Panc1 (cell line): ENCODE measurements at regions of chr14 and their contacts with region 1.

Region 1: GRCh38 chr14:91869556-91869955 is 2.2 kb upstream of the TC2N start:
- DNase-seq: no peak
- ATAC-seq: no peak
- H3K4me3 ChIP-seq: no peak overlapping the region
- H3K27ac ChIP-seq: no peak overlapping the region
- H3K4me1 ChIP-seq: no peaks in the 10 kb centered on the region
- H3K27me3 ChIP-seq: no peaks in the 10 kb centered on the region
- CTCF ChIP-seq: no peak

Region 2: DNA sequence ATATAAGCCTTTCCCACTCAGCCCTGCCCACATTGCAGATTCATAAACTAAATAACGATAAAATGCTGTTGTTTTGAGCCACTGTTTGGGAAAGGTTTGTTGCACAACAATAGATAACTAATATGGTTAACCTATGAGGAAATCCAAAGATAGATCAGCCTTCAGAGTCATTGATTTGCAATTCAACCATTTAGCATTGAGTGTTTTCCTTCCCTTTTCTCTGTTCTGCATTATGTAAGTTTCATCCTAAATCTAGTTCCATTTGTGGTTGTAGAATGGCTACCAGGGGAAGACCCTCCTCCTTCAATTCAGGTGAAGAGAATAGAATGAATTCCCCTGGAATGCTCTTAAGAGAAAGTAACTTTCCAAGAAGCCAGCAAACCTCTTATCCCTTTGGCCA is 21.9 kb before region 1 on chr14:
- CTCF ChIA-PET with region 1: interaction called, 11 read pairs
- POLR2A ChIA-PET with region 1: no interaction called
- in situ Hi-C with region 1: no loop called
- intact Hi-C with region 1: no loop called
- DNase-seq: no peak
- ATAC-seq: no peak
- H3K4me3 ChIP-seq: no peak overlapping the region
- H3K27ac ChIP-seq: no peak overlapping the region
- H3K4me1 ChIP-seq: no peaks in the 10 kb centered on the region
- H3K27me3 ChIP-seq: no peaks in the 10 kb centered on the region; the same call in 1 of the 2 replicates
- CTCF ChIP-seq: no peak

Region 3: GRCh38 chr14:91934554-91935285 is 65.2 kb after region 1 on chr14:
- CTCF ChIA-PET with region 1: no interaction called
- POLR2A ChIA-PET with region 1: no interaction called
- in situ Hi-C with region 1: no loop called
- intact Hi-C with region 1: no loop called
- DNase-seq: no peak
- ATAC-seq: no peak
- H3K4me3 ChIP-seq: no peak overlapping the region
- H3K27ac ChIP-seq: no peak overlapping the region
- H3K4me1 ChIP-seq: no peaks in the 10 kb centered on the region
- H3K27me3 ChIP-seq: no peaks in the 10 kb centered on the region
- CTCF ChIP-seq: no peak

Region 4: DNA sequence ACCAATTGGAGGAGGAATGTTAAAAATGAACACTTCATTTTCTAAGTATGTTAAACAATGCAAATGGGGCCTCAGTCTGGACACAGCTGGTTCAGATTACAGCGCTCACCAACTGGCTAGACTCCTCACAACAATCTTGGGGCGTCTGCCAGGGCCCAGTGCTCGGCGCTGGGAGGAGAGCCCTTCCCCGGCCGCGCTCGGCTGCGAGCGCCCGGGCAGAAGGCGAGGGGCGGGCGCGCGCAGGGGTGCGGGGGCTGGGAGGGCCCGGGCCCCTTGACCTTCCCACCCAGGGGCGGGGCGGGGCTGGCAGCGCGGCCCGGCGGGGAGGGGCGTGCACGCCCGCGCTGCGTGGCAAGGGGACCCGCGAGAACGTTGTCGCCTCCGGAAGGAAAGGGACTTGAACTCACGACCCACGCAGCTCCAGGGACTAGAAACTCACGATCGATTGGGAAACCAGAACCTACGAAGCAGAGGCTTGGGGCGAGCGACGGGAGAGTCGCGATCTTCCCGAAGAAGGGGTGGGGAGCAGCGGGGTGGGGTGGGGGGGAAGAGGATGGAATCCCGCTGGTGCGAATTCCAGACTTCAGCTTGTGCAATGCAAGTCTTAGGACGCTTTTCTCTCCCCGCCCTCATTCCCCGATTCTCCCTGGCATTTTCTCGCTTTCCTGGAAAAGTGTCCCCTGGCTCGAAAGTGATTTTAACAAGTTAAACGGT is 78.1 kb after region 1 on chr14 and contains the start of gene FBLN5:
- CTCF ChIA-PET with region 1: no interaction called
- POLR2A ChIA-PET with region 1: no interaction called
- in situ Hi-C with region 1: no loop called
- intact Hi-C with region 1: no loop called
- DNase-seq: no peak
- ATAC-seq: peak; percentile 62
- H3K4me3 ChIP-seq: peak within 1 kb of the TSS; percentile 34 to 43
- H3K27ac ChIP-seq: no peak within 1 kb of the TSS
- H3K4me1 ChIP-seq: no peaks in the 10 kb centered on the region
- H3K27me3 ChIP-seq: peaks cover 6% of the 10 kb centered on the region
- CTCF ChIP-seq: no peak
- total RNA-seq, gene FBLN5: 0.23 TPM